Ovary (tissue), 10 donors: ENCODE measurements at regions of chr1 and their contacts with region 1.

Region 1: DNA sequence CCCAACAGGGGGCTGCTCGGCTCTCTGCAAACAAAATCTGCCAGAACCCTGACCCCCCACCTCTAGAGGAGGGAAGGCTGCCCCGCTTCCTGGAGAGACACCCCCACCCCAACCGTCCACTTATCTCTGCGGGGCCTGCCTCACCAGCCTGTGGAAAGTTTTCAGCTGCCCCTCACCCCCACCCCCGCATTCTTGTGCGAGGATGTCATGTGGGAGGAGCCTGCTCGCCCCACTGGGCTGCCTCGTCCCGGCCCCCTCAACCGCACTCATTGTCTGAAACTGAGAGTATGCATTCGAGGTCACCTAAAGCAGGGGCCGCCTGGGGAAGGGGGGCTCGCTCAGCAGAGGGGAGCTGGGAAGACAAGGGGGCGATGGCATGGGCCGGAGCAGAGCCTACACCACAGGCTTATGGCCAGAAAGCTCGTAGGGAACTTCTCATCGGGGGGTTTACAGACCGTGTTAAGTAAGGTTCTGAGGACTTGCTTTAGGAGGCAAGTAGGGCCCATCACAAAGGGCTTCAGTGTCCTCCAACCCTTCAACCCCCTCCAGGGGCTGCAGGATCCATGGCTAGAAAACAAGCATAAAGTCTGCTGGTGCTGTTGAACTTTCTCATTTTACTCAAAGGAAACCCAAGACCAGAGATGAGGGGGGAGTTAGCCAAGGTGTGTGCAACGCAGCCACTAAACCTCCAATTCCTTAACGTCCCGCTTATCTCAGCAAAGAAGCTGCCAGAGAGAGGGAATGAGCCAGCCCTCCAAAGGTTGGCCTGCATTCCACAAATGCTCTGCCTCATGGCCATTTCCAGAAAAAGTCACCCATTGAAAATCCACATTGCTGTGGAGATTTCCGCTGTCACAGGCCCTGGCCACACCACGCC is 9.4 kb downstream of the EPHA2 start:
- DNase-seq: peak; percentile 84 to 89 (median 87)
- H3K4me3 ChIP-seq: peak overlapping the region; percentile 25
- H3K27ac ChIP-seq: peak overlapping the region; percentile 26 to 75
- H3K4me1 ChIP-seq: peaks cover 15% of the 10 kb centered on the region
- H3K27me3 ChIP-seq: no peaks in the 10 kb centered on the region
- CTCF ChIP-seq: no peak
- EP300 ChIP-seq: no peak
- POLR2A ChIP-seq: no peak

Region 2: DNA sequence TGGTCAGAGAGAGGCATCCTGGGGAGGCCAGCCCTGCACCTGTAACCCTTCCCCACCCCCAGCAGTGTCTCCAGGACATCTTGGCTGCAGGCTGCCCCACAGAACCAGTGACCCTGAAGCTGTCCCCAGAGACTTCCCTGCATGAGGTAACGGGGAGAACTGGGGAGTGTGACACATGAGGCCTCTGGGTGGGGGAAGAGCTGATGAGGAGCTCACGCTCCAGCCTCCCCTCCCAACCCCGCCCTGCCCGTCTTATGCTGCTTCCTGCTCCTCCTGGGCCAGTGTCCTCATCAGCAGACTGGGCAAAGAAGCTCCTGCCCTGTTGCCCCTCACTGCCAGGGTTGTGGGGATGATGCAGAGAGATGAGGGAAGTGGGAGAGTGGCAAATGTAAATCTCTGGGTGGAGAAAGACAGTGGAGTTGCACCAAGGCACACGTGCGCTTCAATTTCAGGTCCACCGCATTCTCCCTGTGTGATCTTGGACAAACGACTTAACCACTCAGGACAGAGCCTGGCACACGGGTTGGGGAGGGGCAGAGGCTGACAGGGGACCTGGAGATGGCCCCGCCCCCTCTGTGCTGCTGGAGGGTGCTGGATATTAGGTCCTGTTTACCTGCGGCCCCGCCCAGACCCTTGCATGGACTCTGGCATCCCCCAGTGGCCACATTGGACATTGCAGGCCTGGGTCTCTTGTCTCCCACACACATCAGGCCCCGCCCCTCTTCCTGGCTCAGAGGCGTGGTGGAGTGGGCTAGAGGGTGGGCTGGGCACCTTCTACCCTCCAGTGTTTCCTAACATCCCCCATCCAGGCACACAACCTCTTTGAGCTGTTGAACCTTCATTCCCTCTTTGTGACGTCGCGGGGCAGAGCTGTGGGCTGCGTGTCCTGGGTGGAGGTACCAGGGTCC is 90.7 kb before region 1 on chr1:
- intact Hi-C with region 1: no loop called
- DNase-seq: peak; percentile 82 to 91 (median 89)
- H3K4me3 ChIP-seq: no peak overlapping the region
- H3K27ac ChIP-seq: no peak overlapping the region
- H3K4me1 ChIP-seq: no peaks in the 10 kb centered on the region
- H3K27me3 ChIP-seq: no peaks in the 10 kb centered on the region
- CTCF ChIP-seq: peak; percentile 92 to 96 (median 96)
- EP300 ChIP-seq: no peak
- POLR2A ChIP-seq: no peak

Region 3: DNA sequence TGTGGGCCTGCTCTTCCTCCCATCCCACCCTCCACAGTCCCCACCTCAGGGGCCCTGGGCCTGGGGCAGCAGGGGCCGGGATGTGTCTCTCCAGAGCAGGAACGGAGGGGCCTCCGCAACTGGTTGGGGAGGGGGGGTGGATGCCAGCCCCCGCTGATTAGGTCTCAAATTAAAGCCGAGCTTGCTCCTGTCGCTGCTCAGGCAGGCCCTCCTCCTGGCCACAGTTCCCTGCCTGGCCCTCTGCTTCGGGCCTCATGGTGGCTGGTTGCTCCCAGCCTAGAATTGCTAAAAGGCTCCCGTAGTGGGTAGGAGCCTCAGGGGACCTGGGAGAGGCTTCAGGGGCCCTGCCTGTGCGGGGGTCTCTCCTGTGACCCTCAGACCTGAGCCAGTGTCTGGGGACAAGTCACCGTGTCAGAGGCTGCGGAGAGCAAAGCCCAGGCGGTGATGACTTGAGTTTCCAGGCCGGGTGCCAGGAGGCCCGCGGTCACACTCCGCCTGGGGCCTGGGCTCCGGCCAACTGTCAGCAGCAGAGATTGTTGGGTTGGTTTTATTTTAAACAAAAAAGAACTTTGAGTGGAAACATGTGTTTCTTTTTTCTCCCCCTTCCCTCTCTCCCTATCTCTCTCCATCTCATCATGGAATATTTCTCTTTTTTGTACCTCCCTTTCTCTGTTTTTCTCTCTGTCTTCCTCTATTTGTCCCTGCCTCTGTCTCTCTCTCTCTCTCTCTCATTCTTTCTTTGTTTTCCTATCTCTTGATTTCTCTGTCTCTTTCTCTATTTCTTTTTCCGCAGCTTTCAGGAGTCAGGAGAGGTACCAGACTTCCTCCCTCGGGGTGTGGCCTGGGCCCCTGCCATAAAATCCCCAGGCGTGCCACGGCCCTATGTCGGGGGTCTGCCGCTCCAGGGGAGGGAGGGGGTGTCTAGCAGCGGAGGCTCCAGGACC is 29.4 kb after region 1 on chr1:
- intact Hi-C with region 1: loop called in 1 of 4 experiments (anchors 5 kb)
- DNase-seq: peak; percentile 90 to 94 (median 94)
- H3K4me3 ChIP-seq: no peak overlapping the region
- H3K27ac ChIP-seq: peak overlapping the region; percentile 59 to 81
- H3K4me1 ChIP-seq: peaks cover 11% of the 10 kb centered on the region
- H3K27me3 ChIP-seq: no peaks in the 10 kb centered on the region
- CTCF ChIP-seq: no peak
- EP300 ChIP-seq: no peak
- POLR2A ChIP-seq: no peak

Region 4: DNA sequence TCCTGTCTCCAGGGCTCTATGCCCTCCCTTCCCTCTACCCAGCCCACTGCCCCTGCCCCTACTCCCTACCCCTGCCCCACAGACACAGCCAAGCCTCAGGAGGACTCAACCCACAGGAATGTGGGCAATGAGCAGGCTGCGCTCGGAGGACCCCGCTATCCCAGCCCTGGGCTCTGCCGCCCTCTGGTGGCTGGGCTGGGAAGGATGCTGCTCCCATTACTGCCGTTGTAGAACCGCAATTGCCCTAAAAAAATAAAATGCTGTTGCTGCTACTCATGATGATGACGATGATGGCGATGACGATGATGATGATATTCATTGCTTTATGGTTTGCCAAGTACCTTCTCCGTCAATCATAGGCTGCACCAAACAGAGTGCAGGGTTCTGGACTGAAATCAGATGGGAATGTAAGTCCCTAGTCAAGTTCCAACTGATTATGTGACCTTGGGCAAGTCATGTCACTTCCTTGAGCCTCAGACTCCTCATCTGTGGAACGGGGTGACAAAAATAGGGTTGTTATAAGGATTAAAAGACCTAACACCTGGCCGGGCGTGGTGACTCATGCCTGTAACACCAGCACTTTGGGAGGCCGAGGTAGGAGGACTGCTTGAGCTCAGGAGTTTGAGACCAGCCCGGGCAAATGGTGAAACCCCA is 41.4 kb after region 1 on chr1:
- intact Hi-C with region 1: loop called in 1 of 4 experiments (anchors 5 kb)
- DNase-seq: peak; percentile 80 to 89 (median 84)
- H3K4me3 ChIP-seq: no peak overlapping the region
- H3K27ac ChIP-seq: no peak overlapping the region
- H3K4me1 ChIP-seq: peaks cover 5% of the 10 kb centered on the region
- H3K27me3 ChIP-seq: no peaks in the 10 kb centered on the region
- CTCF ChIP-seq: peak; percentile 90 to 99 (median 98)
- EP300 ChIP-seq: no peak
- POLR2A ChIP-seq: peak; percentile 22